ENCODE measurements at regions of chr17 and their contacts with region 1.

Region 1: GRCh38 chr17:32006957-32007462 is at the start of gene LRRC37B:
- DNase-seq: peak; percentile 92
- H3K4me3 ChIP-seq: peak within 1 kb of the TSS; percentile 78 to 93
- H3K27ac ChIP-seq: peak within 1 kb of the TSS; percentile 33 to 58; a peak in 3 of 4 replicates
- H3K4me1 ChIP-seq: peaks cover 0 to 3% of the 10 kb centered on the region in 2 experiments; a peak in 1 of 4 replicates
- H3K27me3 ChIP-seq: no peaks in the 10 kb centered on the region
- CTCF ChIP-seq: peak; percentile 78
- EP300 ChIP-seq: no peak
- RAD21 ChIP-seq: peak; percentile 47
- polyA plus RNA-seq, gene LRRC37B: 9.3 and 10.9 TPM in 2 replicates

Region 2: GRCh38 chr17:31997005-31997404 is 10.0 kb before region 1 on chr17:
- CTCF ChIA-PET with region 1: interaction called, 16 read pairs
- POLR2A ChIA-PET with region 1: no interaction called
- DNase-seq: no peak
- H3K4me3 ChIP-seq: no peak overlapping the region
- H3K27ac ChIP-seq: no peak overlapping the region
- H3K4me1 ChIP-seq: no peaks in the 10 kb centered on the region
- H3K27me3 ChIP-seq: no peaks in the 10 kb centered on the region
- CTCF ChIP-seq: no peak
- EP300 ChIP-seq: no peak
- RAD21 ChIP-seq: no peak

Region 3: DNA sequence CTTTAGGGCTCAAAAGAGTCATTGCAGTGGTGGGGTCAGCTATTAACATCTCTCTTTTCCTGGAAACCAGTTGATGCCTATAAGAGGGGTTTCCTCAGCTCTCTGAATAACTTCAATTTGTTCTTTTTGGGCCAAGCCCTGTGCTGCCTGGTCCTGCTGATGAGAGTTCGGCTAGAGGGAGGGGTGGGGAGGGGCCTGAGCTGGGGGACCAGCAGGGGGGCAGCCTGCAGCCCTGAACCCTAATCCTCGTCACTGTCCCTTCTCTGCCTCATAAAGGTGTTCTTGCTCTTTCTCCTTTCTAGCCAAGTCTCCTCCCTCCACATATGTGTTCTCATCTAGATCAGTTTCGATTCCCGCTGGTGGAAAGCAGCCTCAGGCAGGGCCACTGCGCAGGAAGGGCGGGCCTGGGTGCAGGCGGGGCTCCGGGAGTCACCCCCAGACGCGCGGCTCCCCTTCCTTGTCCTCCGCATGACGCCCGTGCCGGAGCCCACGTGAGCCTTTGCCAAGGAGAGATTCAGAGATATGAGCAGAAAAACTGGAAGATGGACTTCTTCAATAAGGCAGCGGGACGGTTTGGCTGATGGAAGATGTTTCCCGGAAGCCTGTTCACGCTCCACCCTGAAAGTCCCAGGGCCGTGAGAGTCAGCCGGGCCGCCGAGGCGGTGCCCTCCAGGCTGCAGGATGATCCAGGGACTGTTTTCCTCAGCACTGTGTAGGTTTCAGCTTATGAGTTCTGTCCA is 120.3 kb after region 1 on chr17:
- CTCF ChIA-PET with region 1: interaction called, 19 read pairs
- POLR2A ChIA-PET with region 1: interaction called, 4 read pairs
- DNase-seq: peak; percentile 80
- H3K4me3 ChIP-seq: peak overlapping the region; percentile 57 to 78
- H3K27ac ChIP-seq: peak overlapping the region; percentile 79 to 87
- H3K4me1 ChIP-seq: peaks cover 0 to 13% of the 10 kb centered on the region in 2 experiments; a peak in 1 of 4 replicates
- H3K27me3 ChIP-seq: no peaks in the 10 kb centered on the region
- CTCF ChIP-seq: no peak
- EP300 ChIP-seq: no peak
- RAD21 ChIP-seq: no peak

Region 4: GRCh38 chr17:32142038-32142856 is 135.2 kb after region 1 on chr17 and contains the start of gene RHOT1:
- CTCF ChIA-PET with region 1: interaction called, 68 read pairs
- POLR2A ChIA-PET with region 1: interaction called, 5 read pairs
- DNase-seq: peak; percentile 91
- H3K4me3 ChIP-seq: peak within 1 kb of the TSS; percentile 68 to 84
- H3K27ac ChIP-seq: peak within 1 kb of the TSS; percentile 77 to 85
- H3K4me1 ChIP-seq: peaks cover 0 to 3% of the 10 kb centered on the region in 2 experiments; a peak in 1 of 4 replicates
- H3K27me3 ChIP-seq: no peaks in the 10 kb centered on the region
- CTCF ChIP-seq: peak; percentile 57
- EP300 ChIP-seq: peak in 1 of 2 experiments; percentile 46; a peak in 1 of 4 replicates
- RAD21 ChIP-seq: no peak
- polyA plus RNA-seq, gene RHOT1: 25.0 and 36.1 TPM in 2 replicates